CD8-positive, alpha-beta memory T cell (primary cell): ENCODE measurements at regions of chr19 and their contacts with region 1.

Region 1: GRCh38 chr19:46954993-46955812 is 64.4 kb upstream of the NPAS1 start:
- DNase-seq: peak in 3 of 5 donors; percentile 44 to 63 (median 52)
- H3K4me3 ChIP-seq: peak overlapping the region; percentile 52
- H3K4me3 Mint-ChIP-seq: peak overlapping the region; percentile 57 to 89 (median 81)
- H3K27ac ChIP-seq: peak overlapping the region; percentile 76
- H3K27ac Mint-ChIP-seq: peak overlapping the region; percentile 72 to 99 (median 91)
- H3K4me1 ChIP-seq: peaks cover 69% of the 10 kb centered on the region
- H3K4me1 Mint-ChIP-seq: peaks cover 75 to 86% (median 86%) of the 10 kb centered on the region in 3 donors
- H3K27me3 ChIP-seq: no peaks in the 10 kb centered on the region
- H3K27me3 Mint-ChIP-seq: no peaks in the 10 kb centered on the region

Region 2: DNA sequence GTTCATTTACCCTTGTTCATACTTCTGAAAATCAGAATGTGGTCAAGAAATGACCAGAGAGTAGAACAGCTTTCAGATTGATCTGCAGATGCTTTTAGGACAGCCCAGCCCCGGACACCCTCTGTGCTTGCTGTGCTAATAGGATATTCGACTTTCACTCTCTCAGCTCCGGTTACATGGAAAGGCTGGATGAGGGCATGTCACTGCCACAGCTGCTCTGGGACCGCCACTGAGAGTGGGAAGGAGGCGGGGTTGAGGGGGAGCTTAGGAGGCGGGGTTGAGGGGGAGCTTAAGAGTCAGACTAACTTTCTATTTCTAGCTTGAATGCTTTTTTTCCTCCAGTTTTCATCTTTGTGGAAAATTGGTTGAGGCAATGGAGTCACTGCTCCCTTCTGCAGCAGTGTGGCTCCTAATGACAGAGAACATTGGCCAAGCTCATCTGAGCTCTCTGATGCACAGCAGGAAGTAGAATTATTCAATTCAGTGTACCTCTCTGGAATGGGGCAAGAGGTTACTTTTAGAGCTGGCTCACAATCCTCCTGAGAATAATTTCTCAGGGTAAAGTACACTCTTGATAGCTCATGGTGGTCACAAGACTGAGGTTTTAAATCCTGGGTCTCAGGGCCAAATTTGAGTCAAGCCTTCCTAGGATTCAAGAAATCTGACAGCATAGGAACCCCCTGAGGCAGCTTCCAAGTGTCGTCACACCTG is 10.1 kb before region 1 on chr19:
- CTCF ChIA-PET with region 1: interaction called, 11 read pairs
- POLR2A ChIA-PET with region 1: interaction called, 5 read pairs
- DNase-seq: no peak
- H3K4me3 ChIP-seq: no peak overlapping the region
- H3K4me3 Mint-ChIP-seq: peak overlapping the region in 5 of 7 donors; percentile 15 to 54 (median 31)
- H3K27ac ChIP-seq: no peak overlapping the region
- H3K27ac Mint-ChIP-seq: peak overlapping the region in 6 of 8 donors; percentile 12 to 72 (median 38)
- H3K4me1 ChIP-seq: peaks cover 27% of the 10 kb centered on the region
- H3K4me1 Mint-ChIP-seq: peaks cover 56 to 81% (median 74%) of the 10 kb centered on the region in 3 donors
- H3K27me3 ChIP-seq: no peaks in the 10 kb centered on the region
- H3K27me3 Mint-ChIP-seq: no peaks in the 10 kb centered on the region